ENCODE measurements at regions of chr1 and their contacts with region 1.

Region 1: DNA sequence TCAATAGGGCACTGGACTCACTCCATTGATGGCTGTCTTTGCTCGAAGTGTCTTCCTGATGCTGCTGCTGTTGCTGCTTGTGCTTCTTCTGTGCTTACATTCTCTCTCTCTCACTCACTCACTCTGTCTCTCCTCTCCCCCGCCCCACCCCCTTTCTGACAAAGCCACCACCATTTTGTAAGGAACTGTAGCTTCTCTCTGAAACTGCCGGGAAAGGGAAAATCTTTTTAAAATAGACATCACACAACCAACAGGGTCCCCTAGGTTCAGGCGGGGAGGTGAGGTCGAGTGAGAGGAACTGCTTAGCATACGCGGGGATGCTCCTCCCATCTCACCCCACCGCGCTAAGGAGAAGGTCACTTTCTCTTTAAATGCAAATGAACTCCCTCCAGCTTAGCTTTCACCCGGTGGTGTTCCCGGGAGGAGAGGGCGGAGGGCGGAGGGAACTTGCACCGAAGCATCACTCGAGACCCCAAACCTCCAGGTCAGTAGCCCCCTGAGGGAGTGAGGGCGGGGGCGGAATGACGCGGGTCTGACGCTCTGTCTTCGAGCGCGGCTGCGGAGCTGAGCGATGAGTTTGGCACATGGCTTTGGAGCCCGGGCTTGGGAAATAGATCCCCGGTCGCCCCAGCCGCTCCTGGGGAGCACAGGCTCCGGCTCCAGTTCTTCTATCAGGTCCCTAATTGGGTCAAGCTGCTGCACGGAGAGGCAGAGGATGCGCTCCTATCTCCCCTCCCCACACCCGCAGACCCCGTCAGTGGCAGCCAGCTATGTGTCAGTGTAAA is at the start of gene CCDC28B:
- DNase-seq: peak; percentile 35 to 71 (median 62)
- ATAC-seq: peak; percentile 59
- H3K4me3 ChIP-seq: peak within 1 kb of the TSS; percentile 96
- H3K4me3 Mint-ChIP-seq: peak within 1 kb of the TSS; percentile 78 to 99 (median 94)
- H3K27ac ChIP-seq: peak within 1 kb of the TSS; percentile 99
- H3K27ac Mint-ChIP-seq: peak within 1 kb of the TSS; percentile 72 to 98 (median 91)
- H3K4me1 ChIP-seq: peaks cover 32 to 35% of the 10 kb centered on the region in 2 donors
- H3K4me1 Mint-ChIP-seq: peaks cover 41 to 73% (median 60%) of the 10 kb centered on the region in 7 donors
- H3K27me3 ChIP-seq: no peaks in the 10 kb centered on the region
- H3K27me3 Mint-ChIP-seq: no peaks in the 10 kb centered on the region
- total RNA-seq, gene CCDC28B: 6.2 to 39.0 (median 8.7) TPM

Region 2: DNA sequence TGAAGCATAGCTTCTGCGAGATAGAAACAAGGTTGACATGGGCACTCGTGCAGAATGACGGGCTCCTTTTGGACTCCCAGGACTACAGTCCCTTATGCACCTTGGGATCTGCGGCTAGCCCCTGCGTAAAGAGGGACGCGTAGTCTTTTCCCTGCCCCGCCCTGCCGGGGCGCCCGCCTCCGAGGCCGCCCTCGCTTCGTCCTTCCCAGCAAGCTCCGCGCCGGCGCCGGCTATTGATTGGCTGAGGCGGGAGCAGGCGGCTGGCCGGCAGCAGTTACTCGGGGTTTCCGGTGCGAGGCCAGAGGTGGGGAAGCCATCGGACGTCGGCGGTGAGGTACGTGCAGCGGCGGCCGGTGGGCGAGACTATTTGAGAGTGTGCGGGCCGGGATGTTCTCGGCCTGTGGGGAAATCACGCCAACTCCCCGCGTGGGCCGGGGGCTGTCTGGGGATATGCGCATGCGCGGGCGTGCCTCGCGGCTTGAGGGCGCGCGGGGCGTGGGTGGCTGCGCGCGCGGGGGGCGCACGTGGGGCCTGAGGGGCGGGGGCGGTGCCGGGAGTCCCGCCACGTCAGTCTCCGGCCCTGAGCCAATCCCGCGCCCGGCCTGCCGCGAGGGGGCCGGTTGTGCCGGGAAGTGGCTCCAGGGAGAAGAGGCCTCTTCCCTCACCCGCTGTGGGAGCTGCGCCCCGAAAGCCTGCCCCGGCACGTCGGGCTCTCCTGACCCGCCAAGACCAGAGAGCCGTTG is 20.8 kb before region 1 on chr1 and contains the start of gene TXLNA:
- CTCF ChIA-PET with region 1: interaction called, 4 read pairs
- POLR2A ChIA-PET with region 1: interaction called, 49 read pairs
- intact Hi-C with region 1: loop called (anchors 1 kb)
- DNase-seq: peak; percentile 80 to 93 (median 86)
- ATAC-seq: peak; percentile 91
- H3K4me3 ChIP-seq: peak within 1 kb of the TSS; percentile 89
- H3K4me3 Mint-ChIP-seq: peak within 1 kb of the TSS; percentile 86 to 94 (median 91)
- H3K27ac ChIP-seq: peak within 1 kb of the TSS; percentile 89
- H3K27ac Mint-ChIP-seq: peak within 1 kb of the TSS; percentile 84 to 98 (median 92)
- H3K4me1 ChIP-seq: peaks cover 17 to 21% of the 10 kb centered on the region in 2 donors
- H3K4me1 Mint-ChIP-seq: peaks cover 22 to 45% (median 38%) of the 10 kb centered on the region in 7 donors
- H3K27me3 ChIP-seq: no peaks in the 10 kb centered on the region
- H3K27me3 Mint-ChIP-seq: no peaks in the 10 kb centered on the region
- total RNA-seq, gene TXLNA: 16.7 to 83.3 (median 36.3) TPM

Region 3: GRCh38 chr1:32372149-32372756 is 171.8 kb after region 1 on chr1:
- CTCF ChIA-PET with region 1: no interaction called
- POLR2A ChIA-PET with region 1: no interaction called
- intact Hi-C with region 1: loop called in 1 of 2 experiments (anchors 5 kb)
- DNase-seq: peak; percentile 22 to 78 (median 68)
- ATAC-seq: peak; percentile 88
- H3K4me3 ChIP-seq: no peak overlapping the region
- H3K4me3 Mint-ChIP-seq: peak overlapping the region in 2 of 10 donors; percentile 6 to 9
- H3K27ac ChIP-seq: peak overlapping the region; percentile 20
- H3K27ac Mint-ChIP-seq: peak overlapping the region in 7 of 9 donors; percentile 1 to 75 (median 57)
- H3K4me1 ChIP-seq: peaks cover 12% of the 10 kb centered on the region in 2 donors
- H3K4me1 Mint-ChIP-seq: peaks cover 15 to 22% (median 20%) of the 10 kb centered on the region in 7 donors
- H3K27me3 ChIP-seq: no peaks in the 10 kb centered on the region
- H3K27me3 Mint-ChIP-seq: no peaks in the 10 kb centered on the region

Measured in naive thymus-derived CD4-positive, alpha-beta T cell (primary cell).